Spleen (tissue), 13 donors: ENCODE measurements at regions of chr5 and their contacts with region 1.

Region 1: DNA sequence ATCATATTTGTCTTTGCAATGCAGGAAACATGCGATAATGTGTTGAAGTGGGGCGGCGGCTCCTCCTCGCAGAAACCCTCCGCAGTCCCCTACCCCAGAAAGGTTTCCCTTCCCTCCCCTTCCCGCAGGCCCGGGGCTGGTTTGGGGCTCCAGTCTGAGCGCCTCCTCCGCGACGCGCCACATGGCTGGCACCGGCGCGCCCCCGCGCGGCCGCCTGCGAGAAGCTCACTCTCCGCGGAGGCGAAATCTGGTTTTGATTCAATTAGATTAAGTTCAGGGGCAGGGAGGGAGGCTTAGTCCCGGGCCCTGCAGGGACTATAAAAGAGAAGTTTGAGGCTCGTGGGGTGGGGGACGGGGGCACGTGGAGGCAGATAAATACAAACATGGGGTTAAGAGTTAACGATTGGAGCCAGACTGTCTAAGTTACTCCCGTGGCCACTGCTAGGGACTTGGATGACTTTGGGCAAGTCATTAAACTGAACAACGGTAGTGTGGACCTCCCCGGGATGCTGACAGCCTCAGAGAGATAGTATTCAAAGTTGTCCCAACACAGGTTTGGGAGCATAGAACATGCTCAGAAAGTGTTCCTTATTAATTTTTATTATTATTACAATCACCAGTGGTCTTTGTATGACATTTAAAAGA is 69.4 kb downstream of the MSX2 start:
- DNase-seq: peak; percentile 81
- H3K4me3 ChIP-seq: no peak overlapping the region
- H3K27ac ChIP-seq: no peak overlapping the region
- H3K4me1 ChIP-seq: peaks cover 0 to 8% (median 5%) of the 10 kb centered on the region in 6 donors
- H3K27me3 ChIP-seq: peaks cover 0 to 54% (median 11%) of the 10 kb centered on the region in 7 donors
- CTCF ChIP-seq: peak in 10 of 11 experiments; percentile 23 to 79 (median 62)
- POLR2A ChIP-seq: no peak

Region 2: GRCh38 chr5:174418928-174419796 is 374.6 kb before region 1 on chr5:
- intact Hi-C with region 1: loop called (anchors 5 kb)
- DNase-seq: peak; percentile 91
- H3K4me3 ChIP-seq: peak overlapping the region in 1 of 8 donors; percentile 16
- H3K27ac ChIP-seq: no peak overlapping the region
- H3K4me1 ChIP-seq: peaks cover 0 to 9% (median 9%) of the 10 kb centered on the region in 6 donors
- H3K27me3 ChIP-seq: peaks cover 0 to 40% (median 18%) of the 10 kb centered on the region in 7 donors
- CTCF ChIP-seq: peak; percentile 40 to 92 (median 81)
- POLR2A ChIP-seq: no peak

Region 3: DNA sequence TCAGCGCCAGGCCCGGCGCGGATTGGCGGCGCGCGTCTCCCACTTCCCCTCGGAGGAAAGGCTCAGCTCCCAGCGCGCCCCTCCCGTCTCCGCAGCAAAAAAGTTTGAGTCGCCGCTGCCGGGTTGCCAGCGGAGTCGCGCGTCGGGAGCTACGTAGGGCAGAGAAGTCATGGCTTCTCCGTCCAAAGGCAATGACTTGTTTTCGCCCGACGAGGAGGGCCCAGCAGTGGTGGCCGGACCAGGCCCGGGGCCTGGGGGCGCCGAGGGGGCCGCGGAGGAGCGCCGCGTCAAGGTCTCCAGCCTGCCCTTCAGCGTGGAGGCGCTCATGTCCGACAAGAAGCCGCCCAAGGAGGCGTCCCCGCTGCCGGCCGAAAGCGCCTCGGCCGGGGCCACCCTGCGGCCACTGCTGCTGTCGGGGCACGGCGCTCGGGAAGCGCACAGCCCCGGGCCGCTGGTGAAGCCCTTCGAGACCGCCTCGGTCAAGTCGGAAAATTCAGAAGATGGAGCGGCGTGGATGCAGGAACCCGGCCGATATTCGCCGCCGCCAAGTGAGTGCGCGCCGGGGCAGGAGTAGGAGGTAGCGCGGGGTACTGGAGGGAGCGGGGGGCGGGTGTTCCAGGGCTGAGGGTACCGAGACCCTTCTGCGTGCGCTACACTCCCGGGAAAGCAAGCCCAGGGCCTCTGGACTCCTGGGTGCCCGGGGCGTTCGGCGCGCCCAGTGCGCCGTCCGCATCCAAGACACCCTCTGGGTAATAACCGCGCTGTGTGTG is 69.1 kb before region 1 on chr5 and contains the start of gene MSX2:
- intact Hi-C with region 1: no loop called
- DNase-seq: peak; percentile 79
- H3K4me3 ChIP-seq: peak within 1 kb of the TSS; percentile 33 to 69 (median 43)
- H3K27ac ChIP-seq: peak within 1 kb of the TSS in 4 of 8 donors; percentile 52 to 62 (median 62)
- H3K4me1 ChIP-seq: peaks cover 0 to 44% (median 15%) of the 10 kb centered on the region in 6 donors
- H3K27me3 ChIP-seq: peaks cover 0 to 100% (median 87%) of the 10 kb centered on the region in 7 donors
- CTCF ChIP-seq: peak in 1 of 11 experiments; percentile 14
- POLR2A ChIP-seq: no peak
- total RNA-seq, gene MSX2: 0.19 to 3.2 (median 0.67) TPM